Activated T-helper 1 cell treated with anti-CD3 and anti-CD28 coated beads, Interleukin-12 subunit alpha, Interleukin-12 subunit beta, Interleukin-2, Interleukin-4 antibody, amounts not matched to agents 30 ng/mL and 10 ng/mL and 1 ng/mL, durations not matched to agents 14 hours and 24 hours and 36 hours (primary cell): ENCODE measurements at regions of chr12 and their contacts with region 1.

Region 1: DNA sequence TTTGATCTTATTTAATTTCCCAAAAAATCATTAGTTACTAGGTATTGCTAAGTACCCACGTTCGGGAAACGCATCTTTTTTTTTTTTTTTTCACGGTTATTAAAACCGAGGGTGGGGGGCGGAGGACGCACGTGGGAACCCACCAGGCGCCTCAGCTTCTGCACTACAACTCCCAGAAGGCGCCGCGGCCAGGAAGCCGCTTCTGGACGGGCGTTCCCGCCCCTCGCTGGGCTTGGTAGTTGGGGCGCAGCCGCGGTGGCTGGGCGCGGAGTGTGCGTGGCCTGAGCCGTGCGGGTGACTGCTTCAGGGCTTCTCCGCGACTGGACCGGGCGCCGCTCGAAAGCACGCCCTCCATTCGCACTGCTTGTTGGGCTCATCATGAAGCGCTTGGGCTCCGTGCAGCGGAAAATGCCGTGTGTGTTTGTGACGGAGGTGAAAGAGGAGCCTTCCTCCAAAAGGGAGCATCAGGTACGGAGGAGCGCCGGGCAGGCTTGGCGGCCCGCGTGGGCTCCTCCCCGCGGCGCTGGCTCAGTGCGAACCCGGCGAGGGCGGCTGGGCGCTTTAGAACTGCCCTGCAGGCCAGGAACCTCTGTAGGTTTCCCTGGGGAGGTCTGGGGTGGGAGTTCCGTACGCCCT is 6.2 kb upstream of the C12orf50 start:
- DNase-seq: peak; percentile 84
- H3K4me3 Mint-ChIP-seq: peak overlapping the region; percentile 98
- H3K27ac Mint-ChIP-seq: peak overlapping the region; percentile 96
- H3K4me1 Mint-ChIP-seq: peaks cover 55% of the 10 kb centered on the region
- H3K27me3 Mint-ChIP-seq: no peaks in the 10 kb centered on the region

Region 2: GRCh38 chr12:88241862-88242570 is 206.6 kb after region 1 on chr12:
- intact Hi-C with region 1: loop called (anchors 5 kb)
- DNase-seq: no peak
- H3K4me3 Mint-ChIP-seq: no peak overlapping the region
- H3K27ac Mint-ChIP-seq: peak overlapping the region; percentile 75
- H3K4me1 Mint-ChIP-seq: peaks cover 28% of the 10 kb centered on the region
- H3K27me3 Mint-ChIP-seq: no peaks in the 10 kb centered on the region